ENCODE measurements at regions of chr12 and their contacts with region 1.

Region 1: DNA sequence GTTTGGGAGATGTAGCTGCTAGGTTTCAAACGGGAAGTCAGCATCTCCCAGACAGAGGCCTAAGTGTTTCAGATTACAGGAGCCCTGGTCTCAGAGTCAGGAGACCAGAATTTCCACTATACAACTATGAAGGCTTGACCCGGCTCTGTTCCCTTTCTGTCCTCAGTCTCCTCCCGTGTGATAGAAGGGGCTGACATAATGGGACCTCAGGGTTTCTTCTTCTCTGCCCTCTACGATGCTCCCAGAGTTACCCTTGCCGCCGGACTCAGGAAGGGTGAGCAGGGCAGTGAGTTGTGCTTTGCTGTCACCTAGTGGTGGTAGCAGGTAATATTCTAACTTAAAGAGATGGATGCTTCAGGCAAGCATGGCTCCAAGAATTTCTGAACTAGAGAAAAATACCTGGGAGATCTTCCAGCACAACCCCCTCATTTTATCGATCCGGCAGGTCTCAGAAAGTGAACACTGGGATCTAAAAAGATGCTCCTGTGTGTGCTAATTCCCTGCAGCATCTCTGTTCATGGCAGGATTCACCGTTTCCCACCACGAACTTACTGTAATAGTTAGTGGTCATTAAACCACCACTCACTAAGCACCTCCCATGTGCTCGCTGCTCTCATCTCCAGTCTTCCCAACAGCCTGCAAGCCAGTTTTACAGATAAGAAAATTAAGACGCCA is 84.4 kb downstream of the VWF start:
- DNase-seq: peak; percentile 49
- H3K4me3 ChIP-seq: no peak overlapping the region
- H3K27ac ChIP-seq: no peak overlapping the region
- H3K27me3 ChIP-seq: no peaks in the 10 kb centered on the region
- CTCF ChIP-seq: peak; percentile 97

Region 2: GRCh38 chr12:5840944-5841343 is 199.1 kb before region 1 on chr12:
- CTCF ChIA-PET with region 1: no interaction called
- POLR2A ChIA-PET with region 1: no interaction called
- DNase-seq: no peak
- H3K4me3 ChIP-seq: no peak overlapping the region
- H3K27ac ChIP-seq: no peak overlapping the region
- H3K27me3 ChIP-seq: peaks cover 2% of the 10 kb centered on the region
- CTCF ChIP-seq: no peak

Region 3: GRCh38 chr12:5960783-5961182 is 79.2 kb before region 1 on chr12:
- CTCF ChIA-PET with region 1: interaction called, 13 read pairs
- POLR2A ChIA-PET with region 1: no interaction called
- DNase-seq: no peak
- H3K4me3 ChIP-seq: no peak overlapping the region
- H3K27ac ChIP-seq: no peak overlapping the region
- H3K27me3 ChIP-seq: peaks cover 20% of the 10 kb centered on the region
- CTCF ChIP-seq: no peak

Region 4: DNA sequence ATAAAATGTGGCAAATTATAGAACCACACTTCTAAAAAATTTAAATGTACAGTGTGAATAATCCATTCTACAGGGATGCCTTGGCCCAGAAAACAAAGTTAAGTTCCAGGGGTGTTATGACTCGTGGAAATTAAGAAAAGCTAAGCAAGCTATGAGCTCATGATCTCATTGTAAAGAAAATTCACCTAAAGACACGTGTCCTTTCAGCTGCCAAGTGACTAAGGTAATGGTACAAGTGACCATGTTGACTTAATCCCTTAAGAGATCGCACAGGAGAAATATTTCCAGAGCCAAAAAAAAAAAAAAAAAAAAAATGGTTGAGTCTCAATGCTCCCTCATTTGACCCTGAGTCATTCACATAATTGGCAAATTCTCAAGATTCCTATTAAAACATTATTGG is 43.6 kb before region 1 on chr12:
- CTCF ChIA-PET with region 1: interaction called, 295 read pairs
- POLR2A ChIA-PET with region 1: no interaction called
- DNase-seq: no peak
- H3K4me3 ChIP-seq: no peak overlapping the region
- H3K27ac ChIP-seq: no peak overlapping the region
- H3K27me3 ChIP-seq: no peaks in the 10 kb centered on the region
- CTCF ChIP-seq: no peak

Region 5: GRCh38 chr12:6053541-6053940 is 13.5 kb after region 1 on chr12:
- CTCF ChIA-PET with region 1: interaction called, 14 read pairs
- POLR2A ChIA-PET with region 1: no interaction called
- DNase-seq: no peak
- H3K4me3 ChIP-seq: no peak overlapping the region
- H3K27ac ChIP-seq: no peak overlapping the region
- H3K27me3 ChIP-seq: no peaks in the 10 kb centered on the region
- CTCF ChIP-seq: peak; percentile 14; the same call in 1 of the 2 replicates

Region 6: GRCh38 chr12:6182116-6182898 is 142.3 kb after region 1 on chr12:
- CTCF ChIA-PET with region 1: no interaction called
- POLR2A ChIA-PET with region 1: no interaction called
- DNase-seq: no peak
- H3K4me3 ChIP-seq: no peak overlapping the region
- H3K27ac ChIP-seq: peak overlapping the region; percentile 80
- H3K27me3 ChIP-seq: no peaks in the 10 kb centered on the region
- CTCF ChIP-seq: no peak

Measured in AG04450 (cell line).